Activated naive CD4-positive, alpha-beta T cell treated with anti-CD3 and anti-CD28 coated beads for 36 hours (primary cell): ENCODE measurements at regions of chr16 and their contacts with region 1.

Region 1: GRCh38 chr16:11783319-11784037 is 13.6 kb downstream of the ZC3H7A start:
- DNase-seq: peak; percentile 79
- H3K4me3 Mint-ChIP-seq: peak overlapping the region; percentile 71
- H3K27ac Mint-ChIP-seq: peak overlapping the region; percentile 98
- H3K4me1 Mint-ChIP-seq: peaks cover 72% of the 10 kb centered on the region
- H3K27me3 Mint-ChIP-seq: no peaks in the 10 kb centered on the region

Region 2: DNA sequence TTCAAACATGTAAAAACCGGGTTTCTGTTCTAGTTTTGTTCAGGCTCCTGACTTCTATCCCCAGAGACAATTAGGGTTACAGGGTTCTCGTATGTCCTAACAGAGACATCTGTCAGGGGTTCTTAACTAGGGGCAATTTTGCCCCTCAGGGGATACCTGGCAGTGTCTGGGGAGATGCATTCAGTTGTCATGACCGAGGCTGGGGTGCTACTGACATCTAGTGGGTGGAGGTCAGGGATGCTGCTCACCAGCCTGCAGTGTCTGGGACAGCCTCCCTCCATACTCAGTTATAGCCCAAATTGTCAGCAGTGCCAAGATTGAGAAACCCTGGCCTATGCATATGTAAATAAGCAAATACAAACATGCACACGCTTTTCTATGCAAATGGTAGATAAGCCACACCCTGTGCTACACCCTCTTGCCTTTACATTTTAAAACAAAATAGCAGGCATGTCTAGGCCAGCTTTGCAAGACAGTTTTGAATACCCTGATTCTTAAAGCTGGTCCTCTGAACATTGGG is 801.7 kb before region 1 on chr16:
- CTCF ChIA-PET with region 1: no interaction called
- intact Hi-C with region 1: loop called (anchors 10 kb)
- DNase-seq: peak; percentile 76
- H3K4me3 Mint-ChIP-seq: no peak overlapping the region
- H3K27ac Mint-ChIP-seq: no peak overlapping the region
- H3K4me1 Mint-ChIP-seq: peaks cover 36% of the 10 kb centered on the region
- H3K27me3 Mint-ChIP-seq: no peaks in the 10 kb centered on the region

Region 3: DNA sequence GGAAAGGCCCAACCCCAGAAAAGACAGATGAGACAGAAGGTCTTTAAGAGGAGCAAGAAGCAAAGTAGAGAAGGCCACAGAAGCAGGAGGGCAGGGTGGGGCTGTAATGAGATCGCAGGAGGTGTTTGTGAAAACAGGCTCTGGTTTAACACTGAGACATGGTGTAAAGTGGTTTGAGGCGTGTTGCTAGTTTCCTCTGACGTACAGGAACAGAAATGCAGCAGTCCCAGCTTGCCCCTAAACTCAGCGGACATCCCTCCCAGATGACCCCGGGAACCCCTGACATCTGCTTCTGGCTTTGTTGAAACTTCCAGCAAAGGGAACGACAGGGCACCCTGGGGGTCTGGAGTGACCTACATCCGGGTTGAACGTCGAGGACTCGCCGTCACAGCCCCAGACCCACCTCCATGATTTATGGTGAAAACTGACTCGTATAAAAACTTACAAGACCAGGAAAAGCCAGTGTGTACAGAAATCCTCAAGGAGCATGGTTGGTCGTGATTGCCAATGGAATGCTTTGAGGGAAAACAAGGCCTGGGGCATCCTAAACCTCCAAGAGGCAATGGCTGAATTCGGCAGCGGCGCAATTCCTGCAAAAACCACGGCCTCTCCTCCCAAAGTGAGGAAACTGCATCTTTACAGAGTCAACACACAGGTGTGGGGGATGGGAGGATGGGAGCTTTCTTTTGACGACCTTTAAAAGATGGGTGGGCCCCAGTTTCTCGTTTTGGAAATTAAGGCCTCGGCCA is 222.6 kb before region 1 on chr16:
- CTCF ChIA-PET with region 1: no interaction called
- intact Hi-C with region 1: loop called (anchors 5 kb)
- DNase-seq: peak; percentile 84
- H3K4me3 Mint-ChIP-seq: peak overlapping the region; percentile 76
- H3K27ac Mint-ChIP-seq: peak overlapping the region; percentile 96
- H3K4me1 Mint-ChIP-seq: peaks cover 82% of the 10 kb centered on the region
- H3K27me3 Mint-ChIP-seq: no peaks in the 10 kb centered on the region

Region 4: GRCh38 chr16:11742539-11743307 is 40.8 kb before region 1 on chr16 and contains the start of gene TXNDC11:
- CTCF ChIA-PET with region 1: interaction called, 4 read pairs
- intact Hi-C with region 1: loop called (anchors 1 kb)
- DNase-seq: peak; percentile 99
- H3K4me3 Mint-ChIP-seq: peak within 1 kb of the TSS; percentile 91
- H3K27ac Mint-ChIP-seq: peak within 1 kb of the TSS; percentile 96
- H3K4me1 Mint-ChIP-seq: peaks cover 48% of the 10 kb centered on the region
- H3K27me3 Mint-ChIP-seq: no peaks in the 10 kb centered on the region
- total RNA-seq, gene TXNDC11: 24.6 to 25.5 TPM

Region 5: GRCh38 chr16:11806721-11807120 is 23.2 kb after region 1 on chr16:
- CTCF ChIA-PET with region 1: interaction called, 3 read pairs
- intact Hi-C with region 1: loop called (anchors 1 kb)
- DNase-seq: no peak
- H3K4me3 Mint-ChIP-seq: no peak overlapping the region
- H3K27ac Mint-ChIP-seq: no peak overlapping the region
- H3K4me1 Mint-ChIP-seq: peaks cover 10% of the 10 kb centered on the region
- H3K27me3 Mint-ChIP-seq: no peaks in the 10 kb centered on the region

Region 6: DNA sequence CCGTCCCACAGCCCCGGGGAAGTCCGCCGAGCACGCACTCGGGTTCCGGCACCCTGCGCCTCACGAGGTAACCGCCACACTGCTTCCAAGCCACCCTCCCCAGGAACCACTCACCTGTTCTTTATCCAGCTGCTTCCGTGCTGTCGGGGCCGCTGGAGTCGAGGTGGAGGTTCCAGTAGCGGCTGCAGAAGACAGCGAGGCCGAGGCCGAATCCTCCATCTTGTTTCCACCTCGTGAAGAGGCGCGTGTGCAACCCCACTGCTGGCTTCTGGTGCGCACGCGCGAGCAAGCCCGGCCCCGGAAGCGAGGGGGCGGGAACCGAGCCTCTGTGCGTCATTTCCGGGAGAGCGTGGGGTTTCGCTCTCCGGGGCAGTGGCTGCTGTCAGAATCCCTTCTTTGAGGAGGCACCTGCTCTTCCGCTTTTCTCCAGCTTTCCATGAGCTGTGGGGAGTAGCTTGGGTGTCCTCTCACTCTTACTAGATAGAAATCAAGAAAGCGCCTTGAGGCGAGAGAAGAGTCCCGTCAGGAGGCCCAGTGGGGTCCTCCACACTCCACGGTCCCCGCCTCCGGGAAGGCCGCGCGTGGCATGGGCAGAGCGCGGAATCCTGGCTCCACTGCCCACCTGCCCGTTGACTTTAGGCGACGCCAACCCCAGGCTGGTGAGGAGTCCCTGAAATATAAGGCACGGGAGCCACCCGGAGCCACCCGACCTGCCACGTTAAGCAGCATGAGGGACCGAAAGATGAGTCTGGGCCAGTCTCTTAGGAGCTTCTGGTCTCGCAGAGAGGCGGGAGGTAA is 68.0 kb after region 1 on chr16 and contains the start of gene RSL1D1:
- CTCF ChIA-PET with region 1: no interaction called
- intact Hi-C with region 1: loop called (anchors 1 kb)
- DNase-seq: peak; percentile 93
- H3K4me3 Mint-ChIP-seq: peak within 1 kb of the TSS; percentile 98
- H3K27ac Mint-ChIP-seq: peak within 1 kb of the TSS; percentile 90
- H3K4me1 Mint-ChIP-seq: peaks cover 61% of the 10 kb centered on the region
- H3K27me3 Mint-ChIP-seq: no peaks in the 10 kb centered on the region
- total RNA-seq, gene RSL1D1: 354 to 365 TPM

Region 7: DNA sequence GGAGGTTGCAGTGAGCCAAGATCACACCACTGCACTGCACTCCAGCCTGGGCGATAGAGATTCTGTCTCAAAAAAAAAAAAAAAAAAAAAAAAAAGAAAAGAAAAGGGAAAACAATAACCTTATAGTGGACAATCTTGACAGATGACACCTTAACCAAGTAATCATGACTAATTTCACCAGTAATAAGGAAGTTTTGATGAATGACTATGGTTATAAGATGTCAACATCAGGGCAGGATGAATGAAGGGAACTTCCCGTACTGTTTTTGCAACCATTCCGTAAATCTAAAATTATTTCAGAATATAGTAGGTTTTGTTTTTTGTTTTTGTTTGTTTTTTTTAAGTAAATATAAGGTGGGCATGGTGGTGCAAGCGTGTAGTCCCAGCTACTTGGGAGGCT is 109.3 kb after region 1 on chr16:
- CTCF ChIA-PET with region 1: no interaction called
- intact Hi-C with region 1: no loop called
- DNase-seq: no peak
- H3K4me3 Mint-ChIP-seq: no peak overlapping the region
- H3K27ac Mint-ChIP-seq: no peak overlapping the region
- H3K4me1 Mint-ChIP-seq: peaks cover 14% of the 10 kb centered on the region
- H3K27me3 Mint-ChIP-seq: no peaks in the 10 kb centered on the region